ENCODE measurements at regions of chr4 and their contacts with region 1.

Region 1: GRCh38 chr4:145618932-145619638 is at the start of gene MMAA:
- DNase-seq: peak; percentile 97
- ATAC-seq: peak; percentile 100
- total RNA-seq, gene MMAA: 8.5 TPM

Region 2: DNA sequence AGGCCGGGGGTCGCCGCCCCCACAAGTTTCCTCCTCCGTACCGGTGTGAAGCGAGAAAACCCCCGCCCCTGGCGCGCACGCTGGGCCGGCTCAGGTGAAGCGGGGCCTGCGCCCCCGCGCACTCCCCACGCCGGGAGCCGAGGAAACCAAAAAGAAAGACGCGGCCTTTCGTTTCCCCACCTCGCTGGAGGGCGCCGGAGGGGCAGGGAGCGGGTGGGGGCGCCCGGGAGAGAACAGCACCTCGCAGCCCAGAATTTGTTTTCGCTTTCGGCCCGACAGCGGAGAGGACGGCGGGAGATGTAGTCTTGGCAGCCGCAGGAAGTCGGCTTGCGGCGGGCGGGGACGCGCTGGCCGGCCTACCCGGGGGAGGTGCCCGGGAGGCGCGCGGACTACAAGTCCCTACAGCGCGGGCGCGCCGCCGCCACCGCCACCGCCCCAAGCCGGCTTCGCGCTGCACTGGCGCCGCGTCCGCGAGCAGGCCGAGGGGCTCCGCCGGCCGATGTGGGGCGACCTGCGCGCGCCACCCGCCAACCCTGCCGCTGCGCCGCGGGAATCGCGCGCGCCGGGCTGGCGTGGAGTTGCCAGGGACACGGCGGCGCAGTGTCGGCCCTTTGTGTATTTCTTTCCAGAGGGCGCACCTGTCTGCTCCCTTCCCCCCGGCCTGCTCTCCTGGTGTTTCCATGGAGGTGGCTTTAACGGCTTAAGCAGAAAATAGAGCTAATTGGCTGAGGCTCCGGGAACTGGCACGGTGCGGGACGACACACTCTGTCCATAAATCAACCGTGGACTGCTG is 438.6 kb before region 1 on chr4 and contains the start of gene OTUD4:
- intact Hi-C with region 1: loop called (anchors 2 kb)
- DNase-seq: peak; percentile 98
- ATAC-seq: peak; percentile 98
- total RNA-seq, gene OTUD4: 34.5 TPM

Region 3: DNA sequence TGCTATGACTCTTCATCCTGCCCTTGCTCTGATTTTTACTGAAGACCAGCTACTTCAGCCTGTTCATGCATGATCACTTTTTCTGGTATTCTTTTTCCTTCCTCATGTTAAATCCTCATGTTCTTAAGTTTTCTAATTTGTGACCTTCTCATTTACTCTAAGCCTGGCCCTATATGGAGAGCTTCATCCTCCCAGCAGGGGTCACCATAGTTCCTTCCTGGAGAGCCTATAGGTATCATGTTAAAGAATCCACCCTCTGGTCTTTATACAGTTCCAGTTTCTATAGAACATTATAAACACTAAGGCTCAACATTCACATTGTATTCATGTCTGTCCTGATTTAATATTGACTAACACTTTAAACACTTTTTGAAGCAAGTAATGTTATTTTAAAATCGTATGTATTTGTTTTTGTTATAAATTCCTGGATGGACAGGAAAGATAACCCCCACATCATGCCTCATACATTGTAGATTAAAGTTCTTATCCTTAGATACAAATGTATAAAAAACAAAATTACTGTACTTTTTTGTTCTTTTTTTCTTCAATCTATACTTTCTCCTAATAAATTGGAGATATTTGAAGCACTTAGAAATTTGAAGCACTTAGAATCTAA is 384.9 kb before region 1 on chr4:
- intact Hi-C with region 1: loop called (anchors 5 kb)
- DNase-seq: no peak
- ATAC-seq: no peak

Region 4: GRCh38 chr4:145732895-145733880 is 114.1 kb after region 1 on chr4:
- intact Hi-C with region 1: loop called (anchors 2 kb)
- DNase-seq: peak; percentile 95
- ATAC-seq: peak; percentile 98

Region 5: GRCh38 chr4:145887241-145887991 is 268.3 kb after region 1 on chr4:
- intact Hi-C with region 1: loop called (anchors 5 kb)
- DNase-seq: no peak
- ATAC-seq: peak; percentile 70